HepG2 (cell line): ENCODE measurements at regions of chr11 and their contacts with region 1.

Region 1: GRCh38 chr11:19071255-19071654 is 10.7 kb upstream of the MRGPRX2 start:
- DNase-seq: peak; percentile 78
- ATAC-seq: peak; percentile 93
- H3K4me3 ChIP-seq: peak overlapping the region in 1 of 3 experiments; percentile 16; a peak in 1 of 6 replicates
- H3K27ac ChIP-seq: no peak overlapping the region
- H3K4me1 ChIP-seq: no peaks in the 10 kb centered on the region
- H3K27me3 ChIP-seq: peaks cover 2 to 19% of the 10 kb centered on the region in 2 experiments; a peak in 3 of 5 replicates
- CTCF ChIP-seq: peak; percentile 97
- EP300 ChIP-seq: no peak
- POLR2A ChIP-seq: no peak
- RAD21 ChIP-seq: peak; percentile 80

Region 2: DNA sequence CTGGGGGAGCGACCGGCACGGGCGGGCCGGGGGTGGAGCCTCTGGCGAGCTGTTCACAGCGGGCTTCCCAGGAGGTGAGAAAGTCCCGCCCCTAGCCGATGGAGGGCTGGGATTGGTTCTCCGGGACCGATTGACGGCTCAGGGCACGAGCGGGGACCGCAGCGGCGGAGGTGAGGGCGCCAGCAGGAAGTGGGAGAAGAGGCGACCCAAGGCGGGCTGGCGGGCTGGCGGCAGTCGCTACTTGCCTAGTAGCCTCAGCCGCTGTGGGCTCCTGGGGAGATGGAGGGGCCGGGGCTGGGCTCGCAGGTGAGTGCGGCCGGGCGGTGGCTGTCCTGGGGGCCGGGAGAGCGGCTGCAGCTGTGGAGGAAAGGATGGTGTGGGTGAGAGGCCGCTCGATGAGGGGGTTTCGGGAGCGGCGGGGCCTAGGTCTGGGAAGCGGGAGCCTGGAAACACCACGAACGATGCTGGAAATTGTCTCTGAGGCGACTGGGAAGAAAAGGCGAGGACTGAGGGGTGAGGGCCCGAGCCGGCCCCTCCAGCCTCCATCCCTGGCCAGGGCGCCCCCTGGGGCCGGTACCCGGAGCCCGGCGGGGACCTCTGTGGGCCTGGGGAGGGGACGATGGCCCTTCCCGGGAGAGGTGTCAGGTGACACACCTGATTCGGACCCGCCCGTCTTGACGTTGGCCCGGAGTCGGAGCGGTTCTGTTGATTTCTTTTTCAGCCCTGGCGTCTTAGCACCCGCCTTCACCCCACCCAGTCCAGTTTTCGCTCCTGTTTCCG is 45.9 kb after region 1 on chr11 and contains the start of gene ZDHHC13:
- CTCF ChIA-PET with region 1: interaction called, 4 read pairs
- POLR2A ChIA-PET with region 1: no interaction called
- in situ Hi-C with region 1: no loop called
- intact Hi-C with region 1: loop called (anchors 2 kb)
- DNase-seq: peak; percentile 86
- ATAC-seq: peak; percentile 99
- H3K4me3 ChIP-seq: peak within 1 kb of the TSS; percentile 80 to 96 (median 85)
- H3K27ac ChIP-seq: peak within 1 kb of the TSS; percentile 19
- H3K4me1 ChIP-seq: peaks cover 18% of the 10 kb centered on the region
- H3K27me3 ChIP-seq: peaks cover 0 to 4% of the 10 kb centered on the region in 2 experiments; a peak in 3 of 5 replicates
- CTCF ChIP-seq: peak; percentile 62
- EP300 ChIP-seq: no peak
- POLR2A ChIP-seq: peak; percentile 52 to 79
- RAD21 ChIP-seq: no peak
- total RNA-seq, gene ZDHHC13: 9.4 and 11.8 TPM in 2 replicates

Region 3: GRCh38 chr11:19259487-19260345 is 188.5 kb after region 1 on chr11:
- CTCF ChIA-PET with region 1: interaction called, 3 read pairs
- POLR2A ChIA-PET with region 1: no interaction called
- in situ Hi-C with region 1: no loop called
- intact Hi-C with region 1: loop called (anchors 10 kb)
- DNase-seq: no peak
- ATAC-seq: peak; percentile 67
- H3K4me3 ChIP-seq: no peak overlapping the region
- H3K27ac ChIP-seq: no peak overlapping the region
- H3K4me1 ChIP-seq: no peaks in the 10 kb centered on the region
- H3K27me3 ChIP-seq: peaks cover 0 to 6% of the 10 kb centered on the region in 2 experiments; a peak in 2 of 5 replicates
- CTCF ChIP-seq: peak; percentile 69
- EP300 ChIP-seq: no peak
- POLR2A ChIP-seq: no peak
- RAD21 ChIP-seq: peak; percentile 27; the same call in 1 of the 2 replicates

Region 4: GRCh38 chr11:19276859-19277808 is 205.9 kb after region 1 on chr11:
- CTCF ChIA-PET with region 1: no interaction called
- POLR2A ChIA-PET with region 1: no interaction called
- in situ Hi-C with region 1: no loop called
- intact Hi-C with region 1: no loop called
- DNase-seq: peak; percentile 28
- ATAC-seq: peak; percentile 54
- H3K4me3 ChIP-seq: no peak overlapping the region
- H3K27ac ChIP-seq: no peak overlapping the region
- H3K4me1 ChIP-seq: no peaks in the 10 kb centered on the region
- H3K27me3 ChIP-seq: peaks cover 0 to 14% of the 10 kb centered on the region in 2 experiments; a peak in 1 of 5 replicates
- CTCF ChIP-seq: no peak
- EP300 ChIP-seq: no peak
- POLR2A ChIP-seq: no peak
- RAD21 ChIP-seq: no peak

Region 5: GRCh38 chr11:19595840-19596751 is 524.8 kb after region 1 on chr11:
- CTCF ChIA-PET with region 1: no interaction called
- POLR2A ChIA-PET with region 1: no interaction called
- in situ Hi-C with region 1: no loop called
- intact Hi-C with region 1: no loop called
- DNase-seq: no peak
- ATAC-seq: no peak
- H3K4me3 ChIP-seq: no peak overlapping the region
- H3K27ac ChIP-seq: no peak overlapping the region
- H3K4me1 ChIP-seq: peaks cover 4% of the 10 kb centered on the region; the same call in 1 of the 2 replicates
- H3K27me3 ChIP-seq: peaks cover 0 to 8% of the 10 kb centered on the region in 2 experiments; a peak in 1 of 5 replicates
- CTCF ChIP-seq: no peak
- EP300 ChIP-seq: no peak
- POLR2A ChIP-seq: no peak
- RAD21 ChIP-seq: no peak

Region 6: GRCh38 chr11:19742588-19743292 is 671.5 kb after region 1 on chr11:
- CTCF ChIA-PET with region 1: interaction called, 3 read pairs
- POLR2A ChIA-PET with region 1: no interaction called
- in situ Hi-C with region 1: loop called (anchors 10 kb)
- intact Hi-C with region 1: loop called (anchors 2 kb)
- DNase-seq: peak; percentile 52
- ATAC-seq: peak; percentile 95
- H3K4me3 ChIP-seq: no peak overlapping the region
- H3K27ac ChIP-seq: no peak overlapping the region
- H3K4me1 ChIP-seq: no peaks in the 10 kb centered on the region
- H3K27me3 ChIP-seq: peaks cover 0 to 20% of the 10 kb centered on the region in 2 experiments; a peak in 3 of 5 replicates
- CTCF ChIP-seq: peak; percentile 89
- EP300 ChIP-seq: no peak
- POLR2A ChIP-seq: no peak
- RAD21 ChIP-seq: peak; percentile 74